ENCODE measurements at regions of chr4 and their contacts with region 1.

Region 1: DNA sequence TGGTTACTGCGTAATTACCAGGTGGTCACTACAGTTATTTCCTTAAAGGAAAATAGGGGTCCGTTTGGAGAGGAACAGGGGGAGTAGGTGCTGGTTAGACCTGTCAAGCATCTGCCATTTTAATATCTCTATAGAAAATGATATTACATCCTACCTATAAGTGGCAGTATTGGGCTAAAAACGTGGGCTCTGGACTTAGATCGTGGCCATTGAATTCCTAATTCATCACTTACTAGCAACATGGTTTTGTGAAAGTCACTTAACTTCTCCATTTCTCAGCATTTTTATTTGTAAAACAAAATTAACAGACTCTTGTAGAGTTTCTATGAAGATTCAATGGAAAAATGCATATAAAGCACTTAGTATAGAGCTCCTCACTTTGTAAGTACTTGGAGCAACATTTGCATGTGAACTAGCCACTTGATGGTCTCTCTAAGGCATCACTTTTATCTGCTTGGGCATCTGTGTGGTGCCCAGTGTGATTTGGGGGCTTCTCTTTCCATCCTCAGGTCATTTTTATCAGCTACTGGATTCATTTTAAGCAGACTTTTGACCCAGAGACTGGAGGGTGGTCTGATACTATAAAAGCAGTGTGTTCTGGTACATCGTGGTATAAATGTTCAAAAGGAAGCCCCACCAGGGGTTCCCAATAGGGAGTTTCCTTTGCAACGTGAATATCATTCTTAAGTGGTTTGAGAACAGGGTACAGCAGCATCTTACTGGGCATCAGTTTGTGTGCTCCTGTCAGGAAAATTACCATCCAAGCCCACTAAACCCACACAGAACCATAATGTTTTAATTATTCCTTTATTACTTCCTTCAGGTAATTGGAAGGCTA is 42.7 kb upstream of the RASSF6 start:
- DNase-seq: no peak
- ATAC-seq: peak; percentile 71
- H3K4me3 ChIP-seq: no peak overlapping the region
- H3K4me1 ChIP-seq: no peaks in the 10 kb centered on the region
- CTCF ChIP-seq: no peak

Region 2: GRCh38 chr4:73109493-73109892 is 553.4 kb before region 1 on chr4:
- intact Hi-C with region 1: no loop called
- DNase-seq: no peak
- ATAC-seq: no peak
- H3K4me3 ChIP-seq: no peak overlapping the region
- H3K4me1 ChIP-seq: no peaks in the 10 kb centered on the region
- CTCF ChIP-seq: no peak

Region 3: GRCh38 chr4:74133786-74134499 is 471.0 kb after region 1 on chr4:
- intact Hi-C with region 1: loop called (anchors 5 to 10 kb)
- DNase-seq: peak; percentile 68 to 91 (median 71)
- ATAC-seq: peak; percentile 98
- H3K4me3 ChIP-seq: no peak overlapping the region
- H3K4me1 ChIP-seq: no peaks in the 10 kb centered on the region
- CTCF ChIP-seq: peak; percentile 50